Body of pancreas (tissue), 4 donors: ENCODE measurements at regions of chr1 and their contacts with region 1.

Region 1: DNA sequence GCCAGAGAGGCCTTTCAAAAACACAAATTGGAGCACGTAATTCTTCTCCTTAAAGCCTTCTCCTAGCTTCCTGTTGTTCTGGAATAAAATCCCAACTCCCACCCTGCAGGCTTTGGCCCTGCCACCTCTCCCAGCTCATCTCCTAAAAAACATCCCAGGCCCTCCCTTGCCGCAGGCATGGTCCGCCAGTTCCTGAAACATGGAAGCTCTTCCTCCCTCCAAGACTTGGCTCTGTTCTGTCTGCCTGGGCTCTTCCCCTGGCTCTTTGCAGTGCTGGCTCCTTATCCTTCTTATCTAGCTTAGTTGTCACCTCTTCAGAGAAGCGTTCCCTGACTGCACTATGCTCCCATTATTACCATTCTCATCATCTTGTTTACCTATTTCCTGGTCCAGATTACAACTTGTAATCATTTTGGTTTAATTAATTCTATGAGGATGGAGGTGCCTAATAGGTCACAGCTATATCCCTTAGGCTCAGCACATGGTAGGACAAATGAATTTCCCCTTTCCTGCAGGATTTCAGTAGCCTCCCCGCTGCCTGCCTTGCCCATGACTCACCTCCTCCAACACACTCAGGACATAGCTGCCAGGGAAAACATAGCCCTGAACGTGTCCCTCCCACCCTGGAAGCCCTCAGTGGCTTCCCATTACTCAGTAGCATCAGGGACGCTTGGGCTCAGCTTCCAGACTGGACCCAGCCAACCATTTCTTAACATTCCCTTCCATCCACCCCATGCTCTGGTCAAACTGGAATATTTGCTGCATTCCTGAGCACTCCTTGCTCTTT is 15.7 kb upstream of the IGSF21 start:
- DNase-seq: no peak
- ATAC-seq: no peak
- H3K4me3 ChIP-seq: no peak overlapping the region
- H3K27ac ChIP-seq: no peak overlapping the region
- H3K4me1 ChIP-seq: no peaks in the 10 kb centered on the region
- H3K27me3 ChIP-seq: no peaks in the 10 kb centered on the region
- CTCF ChIP-seq: no peak
- POLR2A ChIP-seq: no peak

Region 2: DNA sequence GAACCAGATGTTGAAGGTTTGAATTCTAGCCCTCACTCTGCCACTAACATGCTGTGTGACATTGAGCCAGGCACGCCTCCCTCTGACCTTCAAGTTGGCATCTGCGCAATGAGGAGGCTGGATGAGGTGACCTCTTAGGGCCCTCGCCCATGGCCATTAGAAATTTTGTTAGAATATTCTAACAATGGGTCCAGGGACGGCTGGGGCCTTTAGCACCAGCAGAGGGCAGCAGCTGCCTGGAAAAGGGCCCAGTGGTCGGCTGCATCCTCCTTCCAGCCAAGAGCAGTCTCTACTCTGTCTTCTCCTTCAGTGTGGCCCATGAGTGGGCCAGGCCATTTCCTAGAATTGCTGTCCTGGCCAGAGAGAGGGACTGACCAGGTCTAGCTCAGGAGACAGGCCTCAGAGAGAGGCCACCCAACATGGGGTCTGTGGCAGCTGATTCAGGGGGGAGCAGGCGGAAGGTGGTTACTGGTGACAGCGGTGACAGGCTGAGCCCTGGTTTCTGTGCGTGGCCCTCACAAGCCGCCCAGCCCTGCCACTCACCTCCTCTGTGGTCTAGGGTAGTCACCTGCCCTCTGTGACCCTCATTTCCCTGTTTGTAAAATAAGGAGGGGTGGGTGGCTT is 438.0 kb before region 1 on chr1:
- intact Hi-C with region 1: loop called (anchors 10 kb)
- DNase-seq: peak in 3 of 4 donors; percentile 45 to 52 (median 50)
- ATAC-seq: no peak
- H3K4me3 ChIP-seq: no peak overlapping the region
- H3K27ac ChIP-seq: no peak overlapping the region
- H3K4me1 ChIP-seq: peaks cover 5% of the 10 kb centered on the region
- H3K27me3 ChIP-seq: no peaks in the 10 kb centered on the region
- CTCF ChIP-seq: peak in 6 of 7 experiments; percentile 39 to 51 (median 45)
- POLR2A ChIP-seq: no peak

Region 3: GRCh38 chr1:18166929-18167328 is 75.1 kb after region 1 on chr1:
- intact Hi-C with region 1: no loop called
- DNase-seq: no peak
- ATAC-seq: no peak
- H3K4me3 ChIP-seq: no peak overlapping the region
- H3K27ac ChIP-seq: no peak overlapping the region
- H3K4me1 ChIP-seq: no peaks in the 10 kb centered on the region
- H3K27me3 ChIP-seq: peaks cover 0 to 4% of the 10 kb centered on the region in 2 donors
- CTCF ChIP-seq: no peak
- POLR2A ChIP-seq: no peak